Dorsolateral prefrontal cortex (tissue), 120 donors: ENCODE measurements at regions of chr5 and their contacts with region 1.

Region 1: GRCh38 chr5:78964887-78965286 is 20.2 kb downstream of the ARSB start:
- DNase-seq: peak in 1 of 10 donors; percentile 19
- H3K4me3 ChIP-seq: no peak overlapping the region
- H3K27ac ChIP-seq: no peak overlapping the region
- H3K27me3 ChIP-seq: no peaks in the 10 kb centered on the region
- CTCF ChIP-seq: peak; percentile 8 to 86 (median 69)

Region 2: DNA sequence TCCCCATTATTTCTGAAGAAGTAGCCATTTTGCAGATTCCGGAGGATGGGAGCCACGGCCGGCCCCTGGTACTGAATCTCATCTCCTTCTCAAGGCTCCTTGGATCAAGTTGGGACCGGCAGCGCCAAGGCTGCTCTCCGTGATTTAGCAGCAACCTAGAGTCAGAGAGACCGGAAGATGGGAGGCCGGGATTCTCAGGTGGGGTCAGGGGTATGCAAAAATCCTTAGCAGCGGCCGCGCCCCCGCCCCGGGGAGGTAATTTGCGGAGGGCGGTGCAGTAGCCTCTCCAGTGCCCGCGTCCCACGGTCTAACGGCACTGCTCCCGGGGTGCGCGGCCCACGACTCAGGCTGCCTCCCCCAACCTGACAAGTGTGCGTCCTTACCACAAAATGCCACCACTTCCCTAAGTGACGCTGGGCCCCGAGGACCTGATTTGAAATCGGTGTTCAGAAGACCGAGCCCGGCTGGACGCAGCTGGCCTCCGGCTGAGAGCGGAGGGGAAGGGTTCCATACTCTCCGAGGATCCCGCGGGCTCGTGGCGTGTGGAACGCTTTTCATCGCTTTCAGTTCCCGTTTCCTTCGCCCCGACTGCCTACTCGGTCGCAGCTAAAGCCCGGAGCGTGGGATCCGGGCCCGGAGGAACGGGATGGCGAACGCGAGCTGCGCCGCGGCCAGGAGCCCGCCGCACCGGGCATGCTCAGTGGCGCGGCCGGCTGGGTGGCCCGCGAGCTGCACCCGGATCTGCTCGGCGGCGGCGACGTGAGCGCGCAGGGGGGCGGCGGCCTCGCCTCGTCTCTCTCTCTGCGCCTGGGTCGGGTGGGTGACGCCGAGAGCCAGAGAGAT is 604.8 kb before region 1 on chr5 and contains the start of gene SCAMP1:
- intact Hi-C with region 1: loop called in 1 of 2 experiments (anchors 10 kb)
- DNase-seq: peak; percentile 78 to 93 (median 86)
- H3K4me3 ChIP-seq: peak within 1 kb of the TSS; percentile 67 to 100 (median 97)
- H3K27ac ChIP-seq: peak within 1 kb of the TSS; percentile 72 to 98 (median 91)
- H3K27me3 ChIP-seq: no peaks in the 10 kb centered on the region
- CTCF ChIP-seq: peak in 42 of 56 donors; percentile 13 to 61 (median 37)
- total RNA-seq, gene SCAMP1: 54.8 to 153 (median 108) TPM

Region 3: GRCh38 chr5:78537821-78538220 is 427.1 kb before region 1 on chr5:
- intact Hi-C with region 1: loop called (anchors 1 to 10 kb)
- DNase-seq: peak in 3 of 10 donors; percentile 32 to 48 (median 37)
- H3K4me3 ChIP-seq: no peak overlapping the region
- H3K27ac ChIP-seq: peak overlapping the region in 16 of 59 donors; percentile 1 to 83 (median 28)
- H3K27me3 ChIP-seq: no peaks in the 10 kb centered on the region
- CTCF ChIP-seq: peak in 55 of 56 donors; percentile 43 to 90 (median 75)

Region 4: GRCh38 chr5:78638423-78638822 is 326.5 kb before region 1 on chr5:
- intact Hi-C with region 1: loop called in 1 of 2 experiments (anchors 10 kb)
- DNase-seq: peak in 3 of 10 donors; percentile 26 to 55 (median 44)
- H3K4me3 ChIP-seq: peak overlapping the region in 16 of 59 donors; percentile 1 to 36 (median 16)
- H3K27ac ChIP-seq: peak overlapping the region in 19 of 59 donors; percentile 6 to 68 (median 31)
- H3K27me3 ChIP-seq: no peaks in the 10 kb centered on the region
- CTCF ChIP-seq: peak in 1 of 56 donors; percentile 13

Region 5: GRCh38 chr5:78927657-78928282 is 37.1 kb before region 1 on chr5:
- intact Hi-C with region 1: no loop called
- DNase-seq: no peak
- H3K4me3 ChIP-seq: no peak overlapping the region
- H3K27ac ChIP-seq: peak overlapping the region in 1 of 59 donors; percentile 23
- H3K27me3 ChIP-seq: no peaks in the 10 kb centered on the region
- CTCF ChIP-seq: no peak